Activated B cell treated with CpG ODN at 0.5 μM for 24 hours (primary cell): ENCODE measurements at regions of chr21 and their contacts with region 1.

Region 1: GRCh38 chr21:25176637-25177412 is 430.5 kb downstream of the MRPL39 start:
- DNase-seq: no peak
- ATAC-seq: peak; percentile 85
- H3K4me3 Mint-ChIP-seq: peak overlapping the region; percentile 0
- H3K27ac Mint-ChIP-seq: peak overlapping the region; percentile 91
- H3K4me1 Mint-ChIP-seq: peaks cover 70% of the 10 kb centered on the region
- H3K27me3 Mint-ChIP-seq: no peaks in the 10 kb centered on the region
- CTCF ChIP-seq: no peak

Region 2: GRCh38 chr21:25039461-25040380 is 137.1 kb before region 1 on chr21:
- CTCF ChIA-PET with region 1: no interaction called
- POLR2A ChIA-PET with region 1: no interaction called
- intact Hi-C with region 1: loop called (anchors 5 kb)
- DNase-seq: no peak
- ATAC-seq: peak; percentile 64
- H3K4me3 Mint-ChIP-seq: peak overlapping the region; percentile 74
- H3K27ac Mint-ChIP-seq: peak overlapping the region; percentile 80
- H3K4me1 Mint-ChIP-seq: peaks cover 35% of the 10 kb centered on the region
- H3K27me3 Mint-ChIP-seq: no peaks in the 10 kb centered on the region
- CTCF ChIP-seq: no peak

Region 3: GRCh38 chr21:25188677-25189079 is 11.9 kb after region 1 on chr21:
- CTCF ChIA-PET with region 1: interaction called, 16 read pairs
- POLR2A ChIA-PET with region 1: interaction called, 89 read pairs
- intact Hi-C with region 1: loop called (anchors 1 kb)
- DNase-seq: no peak
- ATAC-seq: peak; percentile 72
- H3K4me3 Mint-ChIP-seq: peak overlapping the region; percentile 44
- H3K27ac Mint-ChIP-seq: peak overlapping the region; percentile 73
- H3K4me1 Mint-ChIP-seq: peaks cover 68% of the 10 kb centered on the region
- H3K27me3 Mint-ChIP-seq: no peaks in the 10 kb centered on the region
- CTCF ChIP-seq: no peak

Region 4: GRCh38 chr21:25396135-25396711 is 219.4 kb after region 1 on chr21:
- CTCF ChIA-PET with region 1: no interaction called
- POLR2A ChIA-PET with region 1: no interaction called
- intact Hi-C with region 1: loop called (anchors 5 kb)
- DNase-seq: peak; percentile 33
- ATAC-seq: peak; percentile 88
- H3K4me3 Mint-ChIP-seq: peak overlapping the region; percentile 81
- H3K27ac Mint-ChIP-seq: peak overlapping the region; percentile 84
- H3K4me1 Mint-ChIP-seq: peaks cover 31% of the 10 kb centered on the region
- H3K27me3 Mint-ChIP-seq: no peaks in the 10 kb centered on the region
- CTCF ChIP-seq: no peak

Region 5: DNA sequence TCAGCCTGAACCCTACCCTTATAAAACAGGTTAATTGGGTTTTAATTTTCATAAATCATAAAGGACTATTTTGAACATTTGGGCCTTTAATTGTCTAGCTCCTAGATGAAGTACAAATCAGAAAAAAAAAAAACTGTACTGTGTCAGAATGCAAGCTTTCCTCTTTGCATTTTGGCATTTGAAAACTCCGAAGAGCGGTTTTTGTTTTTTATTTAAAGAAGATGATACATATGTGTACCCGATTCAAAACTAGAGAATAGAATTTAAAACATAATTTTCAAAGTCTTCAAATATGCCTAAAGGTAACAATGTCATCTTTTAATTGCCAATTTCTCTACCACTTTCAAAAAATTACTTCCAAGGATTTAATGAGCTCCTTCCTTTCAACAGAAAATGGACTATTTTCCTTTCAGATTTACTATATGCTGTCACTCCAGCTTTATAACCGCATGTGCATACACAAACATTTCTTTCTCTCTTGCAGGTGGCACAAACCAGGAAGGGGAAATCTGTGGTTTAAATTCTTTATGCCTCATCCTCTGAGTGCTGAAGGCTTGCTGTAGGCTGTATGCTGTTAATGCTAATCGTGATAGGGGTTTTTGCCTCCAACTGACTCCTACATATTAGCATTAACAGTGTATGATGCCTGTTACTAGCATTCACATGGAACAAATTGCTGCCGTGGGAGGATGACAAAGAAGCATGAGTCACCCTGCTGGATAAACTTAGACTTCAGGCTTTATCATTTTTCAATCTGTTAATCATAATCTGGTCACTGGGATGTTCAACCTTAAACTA is 396.8 kb after region 1 on chr21:
- CTCF ChIA-PET with region 1: no interaction called
- POLR2A ChIA-PET with region 1: interaction called, 4 read pairs
- intact Hi-C with region 1: loop called (anchors 1 kb)
- DNase-seq: no peak
- ATAC-seq: peak; percentile 53
- H3K4me3 Mint-ChIP-seq: peak overlapping the region; percentile 75
- H3K27ac Mint-ChIP-seq: peak overlapping the region; percentile 90
- H3K4me1 Mint-ChIP-seq: peaks cover 90% of the 10 kb centered on the region
- H3K27me3 Mint-ChIP-seq: no peaks in the 10 kb centered on the region
- CTCF ChIP-seq: no peak